ENCODE measurements at regions of chr3 and their contacts with region 1.

Region 1: DNA sequence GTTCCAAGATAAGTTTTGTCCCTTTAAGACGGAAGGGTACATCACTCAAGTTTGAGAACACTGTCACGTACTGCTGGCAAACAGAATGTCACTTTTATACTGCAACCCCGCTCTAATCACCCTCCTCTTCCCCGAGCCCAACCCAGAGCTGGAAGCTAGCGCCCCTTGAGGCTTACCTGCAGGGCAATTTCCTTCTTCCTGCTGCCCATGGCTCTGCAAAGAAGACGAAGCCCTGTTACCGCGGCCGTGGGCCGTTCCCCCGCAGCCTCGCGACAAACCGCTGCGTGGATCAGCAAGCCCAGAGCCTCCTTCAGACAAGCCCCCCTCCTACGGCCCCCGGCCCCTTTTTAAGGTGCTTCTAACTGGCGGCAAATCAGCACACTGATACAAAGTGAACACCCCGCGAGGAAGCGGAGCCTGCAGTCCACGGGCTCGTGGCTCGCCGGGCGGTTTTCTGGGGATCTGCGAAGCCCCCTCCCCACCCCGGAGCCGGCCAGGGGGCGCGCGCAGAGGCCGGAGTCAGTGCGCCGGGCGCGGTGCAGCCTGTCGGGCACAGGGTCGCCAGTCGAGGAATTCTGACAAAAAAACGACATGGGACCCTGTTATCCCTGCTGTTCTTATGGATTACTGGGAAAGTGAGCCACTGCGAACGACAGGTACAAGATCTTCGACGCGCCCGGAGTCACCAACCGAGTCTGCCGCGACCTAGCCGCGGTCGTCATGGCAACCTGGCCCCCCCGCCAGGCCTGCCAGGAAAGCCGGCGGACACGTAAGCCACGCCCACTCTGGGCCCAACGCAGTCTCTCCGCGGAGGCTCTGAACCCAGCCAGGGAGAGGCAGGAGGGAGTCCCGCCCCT is at the start of gene NME9:
- DNase-seq: peak; percentile 32
- ATAC-seq: peak; percentile 91
- H3K4me3 ChIP-seq: peak within 1 kb of the TSS; percentile 60 to 69
- H3K27ac ChIP-seq: peak within 1 kb of the TSS; percentile 24; the same call in 1 of the 2 replicates
- H3K4me1 ChIP-seq: peaks cover 7% of the 10 kb centered on the region; the same call in 1 of the 2 replicates
- H3K27me3 ChIP-seq: peaks cover 19% of the 10 kb centered on the region
- CTCF ChIP-seq: peak; percentile 89
- total RNA-seq, gene NME9: not detected

Region 2: DNA sequence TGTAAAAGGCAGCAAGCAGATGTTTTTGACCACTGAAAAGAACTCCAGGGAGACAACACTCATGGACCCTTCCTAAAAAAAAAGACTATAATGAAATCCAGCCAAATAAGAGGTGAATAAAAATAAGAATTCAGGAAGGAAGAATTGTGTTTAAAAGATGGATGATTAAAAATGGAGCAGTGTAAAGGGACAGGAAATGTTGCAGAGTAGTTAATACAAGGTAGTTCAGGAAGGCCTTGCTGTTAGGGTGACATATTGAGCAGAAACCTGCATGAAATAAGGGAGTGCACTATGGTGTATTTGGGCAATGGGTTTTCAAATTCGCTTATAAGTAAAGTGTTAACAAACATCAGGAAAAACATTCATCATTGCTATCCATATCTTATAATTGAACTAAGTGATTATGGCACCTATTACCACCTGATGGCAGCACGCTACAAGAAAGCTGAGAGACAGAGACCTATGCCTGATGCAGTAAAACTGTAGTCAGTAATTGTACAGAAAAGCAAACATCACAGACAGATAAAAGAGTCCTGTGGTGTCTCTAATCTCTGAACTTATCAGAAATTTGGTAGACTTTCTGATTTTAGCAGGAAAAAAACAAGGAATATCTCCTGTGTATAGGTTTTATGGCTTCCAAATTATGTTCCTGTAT is 148.9 kb before region 1 on chr3:
- CTCF ChIA-PET with region 1: no interaction called
- POLR2A ChIA-PET with region 1: no interaction called
- in situ Hi-C with region 1: no loop called
- intact Hi-C with region 1: loop called (anchors 5 kb)
- DNase-seq: no peak
- ATAC-seq: peak; percentile 96
- H3K4me3 ChIP-seq: no peak overlapping the region
- H3K27ac ChIP-seq: no peak overlapping the region
- H3K4me1 ChIP-seq: no peaks in the 10 kb centered on the region
- H3K27me3 ChIP-seq: no peaks in the 10 kb centered on the region; the same call in 1 of the 2 replicates
- CTCF ChIP-seq: peak; percentile 76; the same call in 1 of the 2 replicates

Region 3: DNA sequence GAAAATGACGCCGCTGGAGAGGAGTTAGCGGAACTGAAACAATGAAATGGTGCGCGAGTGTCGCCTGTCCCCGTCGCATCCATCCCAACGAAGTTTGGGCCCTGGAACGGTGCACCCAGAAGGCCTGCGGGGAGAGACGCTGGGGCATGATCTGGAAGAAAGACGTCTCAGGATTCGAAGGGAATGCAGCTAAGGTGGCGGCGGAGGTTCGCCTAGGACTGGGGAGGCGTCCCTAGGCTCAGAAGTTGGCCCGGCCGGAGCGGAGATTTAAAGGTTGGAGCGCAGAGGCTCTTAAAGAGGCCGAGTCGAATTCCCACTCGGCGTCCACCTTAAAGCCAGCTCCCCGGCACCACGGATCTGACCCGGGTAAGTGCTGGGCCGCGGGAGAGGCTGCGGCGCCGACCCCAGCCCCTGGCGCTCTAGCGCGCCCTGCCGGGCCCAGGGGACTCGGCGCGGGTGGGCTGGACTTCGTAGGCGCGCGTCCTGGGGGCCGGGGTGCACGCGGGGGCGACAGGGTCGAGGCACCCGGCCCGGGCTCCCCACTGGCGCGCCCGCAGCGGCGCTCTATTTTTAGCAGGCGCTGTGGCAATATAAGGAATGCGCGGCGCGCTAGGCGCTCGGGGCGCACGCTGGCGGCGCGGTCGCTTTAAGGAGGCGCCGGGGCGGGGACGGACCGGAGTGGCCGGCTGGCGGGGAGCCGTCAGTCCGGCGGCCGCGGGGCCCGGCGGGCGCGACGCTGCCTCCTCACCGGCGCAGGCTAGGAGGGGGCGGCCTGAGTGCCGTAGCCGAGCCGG is 18.8 kb after region 1 on chr3 and contains the start of gene MRAS:
- CTCF ChIA-PET with region 1: interaction called, 20 read pairs
- POLR2A ChIA-PET with region 1: no interaction called
- in situ Hi-C with region 1: no loop called
- intact Hi-C with region 1: no loop called
- DNase-seq: no peak
- ATAC-seq: peak; percentile 89
- H3K4me3 ChIP-seq: peak within 1 kb of the TSS; percentile 68 to 87
- H3K27ac ChIP-seq: peak within 1 kb of the TSS; percentile 18; the same call in 1 of the 2 replicates
- H3K4me1 ChIP-seq: peaks cover 5% of the 10 kb centered on the region; the same call in 1 of the 2 replicates
- H3K27me3 ChIP-seq: no peaks in the 10 kb centered on the region
- CTCF ChIP-seq: peak; percentile 89
- total RNA-seq, gene MRAS: 14.2 TPM

Region 4: DNA sequence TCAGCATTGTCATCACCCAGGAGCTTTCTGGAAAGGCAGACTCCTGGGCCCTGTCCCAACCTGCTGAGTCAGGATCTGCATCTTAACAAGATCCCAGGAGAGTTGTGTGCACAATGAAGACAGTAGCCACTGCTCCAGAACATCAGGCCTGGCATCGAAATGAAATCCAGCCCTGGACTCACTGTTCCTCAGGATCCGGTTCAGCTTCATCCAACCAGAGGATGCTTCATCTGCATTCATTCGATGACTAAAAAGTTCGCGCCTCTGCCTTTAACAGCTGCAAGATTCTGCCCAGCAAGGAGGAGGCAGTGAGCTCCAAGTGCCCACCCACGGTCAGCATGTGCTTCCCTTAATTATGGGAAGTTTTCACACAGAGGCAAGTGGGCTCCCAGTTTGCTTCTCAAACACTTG is 79.4 kb after region 1 on chr3:
- CTCF ChIA-PET with region 1: no interaction called
- POLR2A ChIA-PET with region 1: no interaction called
- in situ Hi-C with region 1: no loop called
- intact Hi-C with region 1: loop called (anchors 10 kb)
- DNase-seq: no peak
- ATAC-seq: no peak
- H3K4me3 ChIP-seq: no peak overlapping the region
- H3K27ac ChIP-seq: no peak overlapping the region
- H3K4me1 ChIP-seq: no peaks in the 10 kb centered on the region
- H3K27me3 ChIP-seq: no peaks in the 10 kb centered on the region
- CTCF ChIP-seq: no peak